ENCODE measurements at regions of chr4 and their contacts with region 1.

Region 1: DNA sequence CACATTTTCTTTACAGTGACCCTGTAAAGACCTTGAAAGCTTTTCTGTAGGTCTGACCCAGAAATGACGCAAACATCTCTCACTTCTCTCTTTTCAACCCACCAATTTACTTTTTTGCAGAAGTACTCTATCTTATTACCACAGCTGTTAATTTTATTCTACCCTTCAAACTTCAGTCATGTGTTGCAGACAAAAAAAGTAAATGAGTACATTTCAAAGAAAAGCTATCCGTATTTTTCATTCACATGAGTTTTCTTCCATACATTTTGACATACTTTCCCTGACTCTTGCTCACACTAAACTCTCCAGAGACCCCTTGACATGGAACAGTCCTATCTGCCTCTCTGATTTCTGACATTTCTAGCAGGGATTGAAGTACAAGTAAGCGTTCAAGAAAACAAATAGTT is 51.7 kb downstream of the SLC7A11 start:
- DNase-seq: no peak
- ATAC-seq: peak; percentile 90
- H3K4me3 Mint-ChIP-seq: peak overlapping the region; percentile 59
- H3K27ac Mint-ChIP-seq: peak overlapping the region; percentile 66
- H3K4me1 Mint-ChIP-seq: peaks cover 24% of the 10 kb centered on the region
- H3K27me3 Mint-ChIP-seq: no peaks in the 10 kb centered on the region
- CTCF ChIP-seq: no peak

Region 2: DNA sequence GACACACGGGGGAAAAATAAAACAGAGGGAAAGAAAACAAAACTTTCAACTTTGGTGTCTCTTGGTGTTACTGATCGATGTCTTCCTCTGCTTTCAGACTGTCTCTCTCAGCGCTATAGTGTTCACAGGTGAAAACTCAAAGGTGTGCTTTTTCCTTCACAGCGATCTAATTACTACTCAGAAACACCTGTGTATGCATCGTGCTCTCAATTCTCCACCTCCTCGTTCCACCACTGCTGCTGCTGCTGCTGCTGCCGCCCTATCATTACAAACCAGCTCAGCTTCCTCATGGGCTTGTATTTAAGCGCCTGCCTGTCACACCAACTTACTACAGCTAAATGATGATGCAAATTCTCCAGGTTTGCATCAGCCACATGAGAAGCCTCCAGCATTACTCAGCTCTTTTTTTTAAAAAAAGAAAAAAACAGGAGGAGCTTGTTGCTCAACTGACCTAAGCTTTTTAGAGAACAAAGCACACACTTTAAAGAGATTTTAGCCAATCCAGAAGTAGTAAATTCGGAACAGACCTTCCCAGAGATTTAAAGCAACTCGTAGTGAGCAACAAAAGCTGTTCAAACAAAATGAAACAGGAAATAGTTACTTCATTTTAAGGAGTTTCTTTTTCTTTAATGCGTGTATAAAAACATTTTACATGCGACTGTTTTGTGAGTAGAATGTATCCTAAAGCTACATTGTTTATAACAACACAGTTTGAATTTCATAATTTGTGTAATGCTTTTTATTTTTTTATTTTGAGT is 51.8 kb after region 1 on chr4 and contains the start of gene SLC7A11:
- CTCF ChIA-PET with region 1: no interaction called
- POLR2A ChIA-PET with region 1: interaction called, 9 read pairs
- intact Hi-C with region 1: loop called (anchors 1 kb)
- DNase-seq: no peak
- ATAC-seq: peak; percentile 95
- H3K4me3 Mint-ChIP-seq: peak within 1 kb of the TSS; percentile 84
- H3K27ac Mint-ChIP-seq: peak within 1 kb of the TSS; percentile 54
- H3K4me1 Mint-ChIP-seq: peaks cover 16% of the 10 kb centered on the region
- H3K27me3 Mint-ChIP-seq: no peaks in the 10 kb centered on the region
- CTCF ChIP-seq: no peak
- total RNA-seq, gene SLC7A11: 1.2 and 1.4 TPM in 2 replicates

Measured in activated B cell treated with CpG ODN at 0.5 μM for 24 hours (primary cell).